CD4-positive, alpha-beta T cell (primary cell): ENCODE measurements at regions of chr14 and their contacts with region 1.

Region 1: DNA sequence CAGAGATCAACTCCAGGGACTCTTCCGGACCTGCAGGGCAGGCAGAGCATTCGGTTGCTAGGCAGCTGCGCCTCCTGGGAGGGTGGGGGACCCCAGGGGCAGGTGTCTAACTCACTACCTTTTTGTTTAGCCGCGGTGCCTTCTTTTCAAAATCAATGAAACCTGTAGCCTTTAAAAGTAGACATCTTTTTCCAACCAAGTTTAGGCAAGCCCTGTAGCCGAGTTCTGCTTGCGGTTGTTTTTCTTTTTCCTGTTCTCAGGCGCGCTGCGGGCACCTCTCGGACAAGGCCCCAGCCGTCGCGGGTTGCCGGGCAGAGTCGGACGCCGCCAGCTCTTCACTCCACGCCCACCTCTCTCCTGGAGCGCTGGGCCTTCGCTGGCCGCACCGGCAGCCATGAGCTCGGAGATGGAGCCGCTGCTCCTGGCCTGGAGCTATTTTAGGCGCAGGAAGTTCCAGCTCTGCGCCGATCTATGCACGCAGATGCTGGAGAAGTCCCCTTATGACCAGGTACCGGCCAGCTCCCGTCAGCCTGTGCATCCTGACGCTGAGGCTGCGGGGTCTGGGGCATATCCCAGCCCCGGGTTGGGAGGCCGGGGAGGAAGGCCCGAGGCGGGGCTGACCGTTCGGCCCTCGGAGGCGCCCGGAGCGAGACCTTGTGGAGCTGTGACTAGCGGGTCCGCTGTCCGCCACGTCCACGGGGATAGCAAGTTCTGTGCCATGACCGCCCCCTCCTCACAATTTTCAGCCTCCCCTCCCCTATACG is at the start of gene TTC8:
- DNase-seq: peak; percentile 75 to 92 (median 82)
- ATAC-seq: peak; percentile 96
- H3K4me3 ChIP-seq: peak within 1 kb of the TSS; percentile 83
- H3K4me3 Mint-ChIP-seq: peak within 1 kb of the TSS; percentile 86
- H3K27ac ChIP-seq: peak within 1 kb of the TSS; percentile 56 to 90
- H3K27ac Mint-ChIP-seq: peak within 1 kb of the TSS; percentile 96
- H3K4me1 ChIP-seq: peaks cover 7% of the 10 kb centered on the region
- H3K4me1 Mint-ChIP-seq: peaks cover 7% of the 10 kb centered on the region
- H3K27me3 ChIP-seq: no peaks in the 10 kb centered on the region
- H3K27me3 Mint-ChIP-seq: peaks cover 11% of the 10 kb centered on the region
- CTCF ChIP-seq: no peak
- total RNA-seq, gene TTC8: 1.6 to 2.1 TPM

Region 2: DNA sequence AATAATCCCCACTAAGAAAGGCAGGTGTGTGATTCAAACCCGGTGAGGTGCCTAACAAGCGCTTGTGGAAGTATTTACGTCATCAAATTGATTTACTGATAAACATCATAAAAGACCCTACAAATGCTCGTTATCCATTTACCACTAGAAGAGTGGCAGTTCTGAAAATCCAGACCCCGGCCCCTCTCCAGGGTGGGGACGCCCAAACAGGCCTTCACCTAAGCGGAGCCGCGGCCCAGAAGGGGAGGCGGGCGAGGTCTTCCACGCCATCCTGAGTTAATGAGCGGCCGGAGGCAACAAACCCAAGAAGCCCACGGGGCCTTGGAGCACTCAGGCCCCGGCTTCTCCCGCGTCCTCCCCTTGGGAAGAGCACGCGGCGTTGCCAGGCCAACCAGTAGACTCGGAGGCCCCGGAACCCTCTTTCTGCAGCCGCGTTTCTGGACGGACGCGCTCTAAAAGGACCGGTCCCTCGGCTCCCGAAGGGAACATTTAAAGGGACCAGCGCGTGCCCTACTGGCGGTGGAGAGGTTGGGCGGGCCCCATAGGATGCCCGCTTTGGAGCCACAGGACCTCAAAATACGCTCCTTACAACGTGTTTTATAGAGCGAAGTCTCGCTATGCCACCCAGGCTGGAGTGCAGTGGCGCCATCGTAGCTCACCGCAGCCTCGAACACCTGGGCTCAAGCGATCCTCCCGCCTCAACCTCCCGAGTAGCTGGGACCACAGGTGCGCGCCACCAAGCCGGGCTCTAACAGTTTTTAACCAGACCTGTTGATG is 273.2 kb before region 1 on chr14:
- CTCF ChIA-PET with region 1: no interaction called
- POLR2A ChIA-PET with region 1: no interaction called
- intact Hi-C with region 1: loop called in 1 of 2 experiments (anchors 10 kb)
- DNase-seq: peak in 12 of 14 experiments; percentile 7 to 60 (median 34)
- ATAC-seq: peak; percentile 26
- H3K4me3 ChIP-seq: peak overlapping the region; percentile 57
- H3K4me3 Mint-ChIP-seq: peak overlapping the region; percentile 71
- H3K27ac ChIP-seq: no peak overlapping the region
- H3K27ac Mint-ChIP-seq: no peak overlapping the region
- H3K4me1 ChIP-seq: peaks cover 21% of the 10 kb centered on the region
- H3K4me1 Mint-ChIP-seq: peaks cover 31% of the 10 kb centered on the region
- H3K27me3 ChIP-seq: peaks cover 29 to 50% of the 10 kb centered on the region in 2 experiments
- H3K27me3 Mint-ChIP-seq: peaks cover 69% of the 10 kb centered on the region
- CTCF ChIP-seq: no peak

Region 3: DNA sequence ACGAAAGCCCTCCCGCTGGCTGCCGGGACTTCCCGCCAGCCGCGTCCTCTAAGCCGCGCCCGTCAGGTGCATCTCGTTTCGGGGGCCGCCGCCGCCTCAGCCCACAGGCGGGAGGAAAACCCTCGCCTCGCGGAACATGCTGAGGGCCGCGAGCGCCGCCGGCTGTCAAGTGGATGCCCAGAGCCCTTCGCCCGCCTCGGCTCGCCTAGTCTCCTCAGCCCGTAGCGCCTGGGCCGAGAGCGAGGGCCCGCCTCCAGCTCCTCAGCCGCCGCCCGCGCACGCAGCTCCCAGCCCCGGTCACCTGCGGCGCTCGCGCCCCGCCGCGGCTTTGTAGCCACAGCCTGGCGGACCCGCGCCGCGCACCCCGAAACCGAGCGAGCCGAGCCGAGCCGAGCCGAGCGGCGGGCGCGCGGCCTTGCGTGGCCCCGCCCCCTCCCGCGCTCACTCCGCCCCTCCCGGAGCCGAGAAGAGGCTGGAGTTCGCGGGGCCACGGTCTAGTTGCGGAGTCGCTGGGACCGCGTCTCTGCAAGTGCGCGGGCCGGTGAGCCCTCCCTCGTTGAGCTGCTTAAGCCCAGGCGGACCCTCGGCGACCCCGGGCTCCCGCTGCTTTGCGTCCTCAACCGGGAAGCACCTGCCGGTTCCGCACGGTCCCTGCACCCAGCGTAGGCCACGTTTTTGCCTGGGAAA is 31.8 kb before region 1 on chr14 and contains the start of gene EML5:
- CTCF ChIA-PET with region 1: no interaction called
- POLR2A ChIA-PET with region 1: interaction called, 20 read pairs
- intact Hi-C with region 1: loop called (anchors 1 to 2 kb)
- DNase-seq: peak; percentile 64 to 93 (median 80)
- ATAC-seq: peak; percentile 87
- H3K4me3 ChIP-seq: peak within 1 kb of the TSS; percentile 89
- H3K4me3 Mint-ChIP-seq: peak within 1 kb of the TSS; percentile 95
- H3K27ac ChIP-seq: peak within 1 kb of the TSS in 1 of 2 donors; percentile 61
- H3K27ac Mint-ChIP-seq: peak within 1 kb of the TSS; percentile 85
- H3K4me1 ChIP-seq: peaks cover 16% of the 10 kb centered on the region
- H3K4me1 Mint-ChIP-seq: peaks cover 20% of the 10 kb centered on the region
- H3K27me3 ChIP-seq: peaks cover 0 to 3% of the 10 kb centered on the region in 2 experiments
- H3K27me3 Mint-ChIP-seq: no peaks in the 10 kb centered on the region
- CTCF ChIP-seq: peak; percentile 24
- total RNA-seq, gene EML5: 2.8 to 3.1 TPM

Region 4: GRCh38 chr14:88848571-88848970 is 24.1 kb after region 1 on chr14:
- CTCF ChIA-PET with region 1: no interaction called
- POLR2A ChIA-PET with region 1: no interaction called
- intact Hi-C with region 1: no loop called
- DNase-seq: no peak
- ATAC-seq: no peak
- H3K4me3 ChIP-seq: no peak overlapping the region
- H3K4me3 Mint-ChIP-seq: no peak overlapping the region
- H3K27ac ChIP-seq: no peak overlapping the region
- H3K27ac Mint-ChIP-seq: no peak overlapping the region
- H3K4me1 ChIP-seq: no peaks in the 10 kb centered on the region
- H3K4me1 Mint-ChIP-seq: no peaks in the 10 kb centered on the region
- H3K27me3 ChIP-seq: no peaks in the 10 kb centered on the region
- H3K27me3 Mint-ChIP-seq: no peaks in the 10 kb centered on the region
- CTCF ChIP-seq: no peak

Region 5: DNA sequence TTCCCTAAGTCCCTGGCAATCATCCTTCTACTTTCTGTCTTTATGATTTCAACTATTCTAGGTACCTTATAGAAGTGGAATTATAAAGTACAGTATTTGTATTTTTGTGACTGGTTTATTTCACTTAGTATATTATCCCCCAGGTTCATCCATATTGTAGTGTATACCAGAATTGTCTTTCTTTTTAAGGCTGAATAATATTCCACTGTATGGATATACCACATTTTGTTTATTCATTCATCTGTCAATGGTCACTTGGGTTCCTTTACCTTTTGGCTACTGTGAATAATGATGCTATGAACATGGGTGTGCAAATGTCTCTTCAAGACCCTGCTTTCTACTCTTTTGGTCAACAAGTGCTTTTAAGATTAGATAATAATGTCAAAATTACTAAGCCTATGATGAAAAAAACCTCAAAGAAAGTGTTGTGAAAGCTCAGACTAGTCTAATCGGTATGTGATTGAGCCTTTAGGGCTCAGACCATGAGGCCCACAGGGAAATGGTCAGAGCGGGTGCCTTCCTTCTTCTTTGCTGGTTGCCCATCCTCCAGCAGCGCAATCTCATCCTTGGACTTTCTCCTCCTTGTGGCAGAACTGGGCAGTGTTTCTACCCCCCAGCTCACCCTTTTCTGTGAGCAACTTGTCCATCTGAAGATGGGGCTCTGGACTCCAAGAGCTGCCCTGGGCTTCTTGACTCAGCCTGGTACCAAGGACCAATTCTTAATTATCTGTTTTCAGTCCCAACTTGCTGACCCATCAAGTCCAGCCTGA is 105.3 kb after region 1 on chr14:
- CTCF ChIA-PET with region 1: no interaction called
- POLR2A ChIA-PET with region 1: no interaction called
- intact Hi-C with region 1: no loop called
- DNase-seq: peak in 2 of 14 experiments; percentile 2 to 8
- ATAC-seq: no peak
- H3K4me3 ChIP-seq: no peak overlapping the region
- H3K4me3 Mint-ChIP-seq: no peak overlapping the region
- H3K27ac ChIP-seq: no peak overlapping the region
- H3K27ac Mint-ChIP-seq: no peak overlapping the region
- H3K4me1 ChIP-seq: no peaks in the 10 kb centered on the region
- H3K4me1 Mint-ChIP-seq: no peaks in the 10 kb centered on the region
- H3K27me3 ChIP-seq: peaks cover 0 to 10% of the 10 kb centered on the region in 2 experiments
- H3K27me3 Mint-ChIP-seq: peaks cover 56% of the 10 kb centered on the region
- CTCF ChIP-seq: no peak